ENCODE measurements at regions of chr11 and their contacts with region 1.

Region 1: GRCh38 chr11:73661035-73661628 is 14.8 kb downstream of the PLEKHB1 start:
- DNase-seq: peak; percentile 97
- H3K4me3 ChIP-seq: peak overlapping the region; percentile 35 to 51; a peak in 3 of 4 replicates
- H3K27ac ChIP-seq: no peak overlapping the region
- H3K4me1 ChIP-seq: peaks cover 0 to 6% of the 10 kb centered on the region in 2 experiments; a peak in 1 of 4 replicates
- H3K27me3 ChIP-seq: no peaks in the 10 kb centered on the region
- CTCF ChIP-seq: peak; percentile 94
- EP300 ChIP-seq: no peak
- RAD21 ChIP-seq: peak; percentile 99

Region 2: DNA sequence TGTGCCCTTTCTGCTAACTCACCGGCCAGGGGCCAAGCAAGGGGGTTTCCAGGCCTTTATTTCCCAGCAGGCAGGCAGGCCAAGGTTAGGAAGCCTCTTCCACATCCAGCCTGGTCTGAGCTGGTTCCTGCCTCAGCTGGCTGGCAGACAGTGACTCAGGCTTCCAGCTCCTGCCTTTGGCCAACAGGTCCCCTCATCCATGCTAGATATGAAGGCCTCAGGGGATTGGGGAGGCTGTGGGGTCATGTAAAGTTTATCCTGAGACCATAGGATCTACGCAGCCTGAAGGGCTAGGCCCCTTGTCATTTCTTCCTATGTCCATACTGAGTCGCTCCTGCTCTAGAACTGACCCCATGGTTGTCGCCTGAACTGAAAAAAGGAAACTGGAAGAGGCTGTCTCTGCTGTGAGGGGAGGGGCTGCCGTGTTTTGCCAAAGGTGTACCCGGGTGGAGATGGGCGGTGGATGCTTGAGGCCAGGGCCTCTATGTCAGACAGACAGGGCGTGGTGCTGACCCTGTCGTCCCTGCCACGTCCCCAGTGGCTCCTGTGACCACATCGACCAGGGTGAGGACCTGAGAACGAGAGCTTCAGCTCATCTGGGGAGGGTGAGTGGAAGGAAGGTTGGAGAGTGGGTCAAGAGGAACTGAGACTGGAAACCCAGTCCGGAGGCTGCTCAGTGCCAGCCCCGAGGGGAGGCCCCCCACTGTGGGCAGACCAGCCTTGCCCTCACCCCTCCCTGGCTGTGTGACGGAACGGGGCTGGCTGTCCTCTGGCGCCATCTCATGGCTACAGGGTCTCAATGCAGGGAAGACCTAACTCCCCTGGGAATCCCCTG is 372.0 kb before region 1 on chr11:
- CTCF ChIA-PET with region 1: interaction called, 10 read pairs
- POLR2A ChIA-PET with region 1: no interaction called
- DNase-seq: peak; percentile 92
- H3K4me3 ChIP-seq: peak overlapping the region in 1 of 2 experiments; percentile 25; a peak in 1 of 4 replicates
- H3K27ac ChIP-seq: peak overlapping the region; percentile 35 to 48
- H3K4me1 ChIP-seq: peaks cover 9 to 29% of the 10 kb centered on the region in 2 experiments
- H3K27me3 ChIP-seq: no peaks in the 10 kb centered on the region
- CTCF ChIP-seq: peak; percentile 95
- EP300 ChIP-seq: no peak
- RAD21 ChIP-seq: peak; percentile 97

Region 3: DNA sequence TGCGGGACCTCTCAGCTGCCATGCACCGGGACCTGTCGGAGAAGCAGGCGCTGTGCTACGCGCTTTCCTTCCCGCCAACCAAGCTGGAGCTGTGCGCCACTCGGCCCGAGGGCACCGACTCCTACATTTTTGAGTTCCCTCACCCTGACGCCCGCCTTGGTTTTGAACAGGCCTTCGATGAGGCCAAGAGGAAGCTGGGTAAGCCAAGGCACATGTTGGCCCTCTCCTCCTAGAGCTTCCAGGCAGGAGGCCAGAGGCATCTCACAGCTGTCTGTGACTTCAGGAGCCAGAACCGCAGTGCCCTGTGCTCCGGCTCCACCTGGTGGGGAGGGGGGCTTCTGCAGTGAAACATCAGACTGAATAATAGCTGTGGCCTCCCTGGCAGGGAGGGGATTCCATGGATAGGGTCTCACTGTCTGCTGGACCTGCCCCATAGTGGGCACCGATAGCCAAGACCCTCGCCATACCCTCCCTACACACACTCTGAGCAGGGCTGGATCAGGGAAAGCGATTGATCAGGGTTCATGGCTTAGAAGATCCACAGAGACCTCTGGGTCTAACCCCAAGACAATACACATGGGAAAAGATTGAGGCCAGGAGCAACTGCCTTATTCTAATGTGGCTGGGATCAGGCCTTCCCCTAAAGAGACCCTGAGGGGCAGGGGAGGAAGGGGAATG is 300.7 kb before region 1 on chr11:
- CTCF ChIA-PET with region 1: interaction called, 12 read pairs
- POLR2A ChIA-PET with region 1: no interaction called
- DNase-seq: peak; percentile 78
- H3K4me3 ChIP-seq: no peak overlapping the region; a peak in 1 of 4 replicates
- H3K27ac ChIP-seq: no peak overlapping the region
- H3K4me1 ChIP-seq: peaks cover 0 to 8% of the 10 kb centered on the region in 2 experiments; a peak in 1 of 4 replicates
- H3K27me3 ChIP-seq: no peaks in the 10 kb centered on the region
- CTCF ChIP-seq: peak; percentile 54
- EP300 ChIP-seq: no peak
- RAD21 ChIP-seq: peak; percentile 57

Region 4: GRCh38 chr11:73404048-73404447 is 257.1 kb before region 1 on chr11:
- CTCF ChIA-PET with region 1: interaction called, 122 read pairs
- POLR2A ChIA-PET with region 1: no interaction called
- DNase-seq: peak; percentile 84
- H3K4me3 ChIP-seq: no peak overlapping the region
- H3K27ac ChIP-seq: no peak overlapping the region
- H3K4me1 ChIP-seq: no peaks in the 10 kb centered on the region
- H3K27me3 ChIP-seq: no peaks in the 10 kb centered on the region
- CTCF ChIP-seq: peak; percentile 81
- EP300 ChIP-seq: no peak
- RAD21 ChIP-seq: peak; percentile 94

Region 5: GRCh38 chr11:73463359-73463758 is 197.8 kb before region 1 on chr11:
- CTCF ChIA-PET with region 1: interaction called, 12 read pairs
- POLR2A ChIA-PET with region 1: no interaction called
- DNase-seq: no peak
- H3K4me3 ChIP-seq: no peak overlapping the region
- H3K27ac ChIP-seq: peak overlapping the region in 1 of 2 experiments; percentile 49; a peak in 2 of 4 replicates
- H3K4me1 ChIP-seq: peaks cover 9 to 27% of the 10 kb centered on the region in 2 experiments
- H3K27me3 ChIP-seq: no peaks in the 10 kb centered on the region
- CTCF ChIP-seq: no peak
- EP300 ChIP-seq: no peak
- RAD21 ChIP-seq: no peak

Region 6: DNA sequence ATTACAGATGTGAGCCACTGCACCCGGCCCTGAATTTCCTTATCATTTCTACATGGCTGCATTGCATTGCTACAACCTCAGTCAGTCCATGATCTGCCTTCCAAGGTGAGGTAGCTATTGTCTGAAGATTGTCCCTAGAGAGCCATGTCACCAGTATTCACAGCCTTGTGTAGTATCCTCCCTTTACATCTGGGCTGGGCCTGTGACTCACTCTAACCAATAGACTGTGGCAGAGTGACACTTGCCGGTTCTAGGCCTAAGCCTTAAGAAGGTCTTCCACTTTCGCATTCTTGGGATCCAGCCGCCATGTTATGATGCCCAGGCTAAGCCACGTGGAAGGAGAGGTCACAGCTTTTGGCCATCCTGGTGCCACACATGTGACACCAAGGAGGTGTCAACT is 24.9 kb before region 1 on chr11:
- CTCF ChIA-PET with region 1: interaction called, 13 read pairs
- POLR2A ChIA-PET with region 1: no interaction called
- DNase-seq: no peak
- H3K4me3 ChIP-seq: no peak overlapping the region
- H3K27ac ChIP-seq: no peak overlapping the region
- H3K4me1 ChIP-seq: no peaks in the 10 kb centered on the region
- H3K27me3 ChIP-seq: no peaks in the 10 kb centered on the region
- CTCF ChIP-seq: no peak
- EP300 ChIP-seq: no peak
- RAD21 ChIP-seq: no peak